CD8-positive, alpha-beta T cell (primary cell): ENCODE measurements at regions of chr10 and their contacts with region 1.

Region 1: DNA sequence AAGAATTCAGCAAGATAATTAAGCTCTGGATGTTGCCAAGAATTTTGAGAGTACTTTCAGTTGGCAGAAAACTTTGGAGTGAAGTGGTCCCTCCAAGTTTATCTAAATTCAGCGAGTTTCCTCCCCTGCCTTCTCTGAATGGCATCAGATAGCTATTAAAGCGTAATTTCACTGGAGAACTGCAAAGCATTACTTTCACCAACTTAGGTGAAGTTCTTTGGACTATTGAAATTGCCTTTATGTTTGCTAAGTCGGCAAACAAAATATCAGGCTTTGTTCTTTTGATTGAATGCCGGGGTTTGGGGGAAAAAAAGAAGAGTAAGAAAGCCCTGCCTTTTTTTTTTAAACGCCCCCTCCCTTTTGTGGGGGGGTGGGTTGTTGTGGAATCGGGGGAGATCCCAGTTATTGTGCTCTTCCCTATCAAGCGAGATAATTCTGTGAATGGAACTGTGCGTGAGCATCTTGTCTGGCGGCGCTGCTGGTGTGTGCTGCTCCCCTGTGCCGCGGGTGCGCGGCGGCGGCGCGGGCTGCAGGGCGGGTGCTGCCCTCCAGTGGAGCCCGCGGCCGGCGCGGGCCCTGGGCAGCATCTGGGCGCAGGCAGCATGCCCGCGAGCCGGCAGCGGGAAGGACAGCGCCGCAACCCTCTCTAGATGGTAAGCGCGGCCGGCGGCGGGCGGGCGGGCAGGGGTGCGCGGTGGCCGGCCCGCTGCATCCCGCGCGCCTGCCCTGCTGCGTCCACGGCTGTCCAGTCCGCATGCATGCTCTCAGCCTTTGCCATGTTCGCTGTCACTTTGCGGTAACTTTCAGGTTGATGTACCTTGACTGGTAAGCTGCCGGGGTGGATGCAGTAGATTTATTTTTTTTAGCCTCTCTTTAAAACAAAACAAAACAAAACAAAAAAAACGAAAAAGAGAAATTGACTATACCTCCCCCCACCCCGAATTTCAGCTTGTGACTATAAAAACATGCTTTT is 176.5 kb downstream of the TCF7L2 start:
- DNase-seq: peak; percentile 7 to 70 (median 45)
- ATAC-seq: peak; percentile 91
- H3K4me3 ChIP-seq: no peak overlapping the region
- H3K4me3 Mint-ChIP-seq: peak overlapping the region; percentile 57
- H3K27ac ChIP-seq: no peak overlapping the region
- H3K27ac Mint-ChIP-seq: no peak overlapping the region
- H3K4me1 ChIP-seq: peaks cover 5% of the 10 kb centered on the region
- H3K4me1 Mint-ChIP-seq: peaks cover 6% of the 10 kb centered on the region
- H3K27me3 ChIP-seq: peaks cover 0 to 2% of the 10 kb centered on the region in 2 experiments
- H3K27me3 Mint-ChIP-seq: peaks cover 25% of the 10 kb centered on the region
- CTCF ChIP-seq: peak; percentile 49

Region 2: DNA sequence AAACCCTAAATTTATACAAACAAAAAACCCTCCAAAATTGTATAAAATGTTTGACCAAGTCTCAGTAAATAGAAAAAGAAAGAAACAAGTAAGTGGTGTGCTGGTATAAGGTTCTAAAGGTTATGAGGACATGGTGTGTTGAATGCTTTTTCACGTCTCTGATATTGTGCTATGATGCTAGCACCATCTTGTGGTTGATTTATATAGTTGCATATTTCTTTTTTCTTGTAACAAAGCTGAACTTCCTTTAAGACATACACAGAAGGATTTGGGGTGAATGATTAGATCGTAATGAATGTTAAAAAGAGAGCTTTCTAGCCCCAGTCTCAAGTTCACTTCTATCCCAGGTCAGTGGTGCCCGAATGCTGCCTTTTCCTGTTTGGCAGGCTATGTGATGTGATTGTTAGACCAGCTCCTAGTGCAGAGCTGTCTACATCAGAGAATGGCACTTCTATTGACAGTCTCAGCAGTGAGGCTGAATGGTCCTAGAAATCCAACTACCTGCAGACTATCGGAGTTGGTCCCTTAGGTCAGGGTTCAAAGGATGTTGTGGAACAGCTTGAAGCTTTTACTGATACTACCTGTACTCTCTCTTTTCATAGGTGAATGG is 654.5 kb before region 1 on chr10:
- CTCF ChIA-PET with region 1: interaction called, 4 read pairs
- POLR2A ChIA-PET with region 1: no interaction called
- intact Hi-C with region 1: loop called in 1 of 2 experiments (anchors 2 kb)
- DNase-seq: peak in 2 of 9 experiments; percentile 54 to 66
- ATAC-seq: peak; percentile 81
- H3K4me3 ChIP-seq: no peak overlapping the region
- H3K4me3 Mint-ChIP-seq: no peak overlapping the region
- H3K27ac ChIP-seq: no peak overlapping the region
- H3K27ac Mint-ChIP-seq: no peak overlapping the region
- H3K4me1 ChIP-seq: no peaks in the 10 kb centered on the region
- H3K4me1 Mint-ChIP-seq: peaks cover 9% of the 10 kb centered on the region
- H3K27me3 ChIP-seq: no peaks in the 10 kb centered on the region
- H3K27me3 Mint-ChIP-seq: no peaks in the 10 kb centered on the region
- CTCF ChIP-seq: peak; percentile 84